ENCODE measurements at regions of chr2 and their contacts with region 1.

Region 1: GRCh38 chr2:180125245-180125962 is 118.3 kb upstream of the CWC22 start:
- DNase-seq: peak; percentile 84
- H3K4me3 ChIP-seq: no peak overlapping the region
- H3K27ac ChIP-seq: no peak overlapping the region
- H3K4me1 ChIP-seq: peaks cover 0 to 18% (median 9%) of the 10 kb centered on the region in 4 donors
- H3K27me3 ChIP-seq: no peaks in the 10 kb centered on the region
- CTCF ChIP-seq: peak in 3 of 4 experiments; percentile 33 to 49 (median 42)
- EP300 ChIP-seq: no peak
- POLR2A ChIP-seq: no peak

Region 2: GRCh38 chr2:179193759-179194394 is 931.5 kb before region 1 on chr2:
- intact Hi-C with region 1: no loop called
- DNase-seq: no peak
- H3K4me3 ChIP-seq: no peak overlapping the region
- H3K27ac ChIP-seq: no peak overlapping the region
- H3K4me1 ChIP-seq: peaks cover 0 to 24% (median 2%) of the 10 kb centered on the region in 4 donors
- H3K27me3 ChIP-seq: no peaks in the 10 kb centered on the region
- CTCF ChIP-seq: no peak
- EP300 ChIP-seq: no peak
- POLR2A ChIP-seq: no peak

Region 3: DNA sequence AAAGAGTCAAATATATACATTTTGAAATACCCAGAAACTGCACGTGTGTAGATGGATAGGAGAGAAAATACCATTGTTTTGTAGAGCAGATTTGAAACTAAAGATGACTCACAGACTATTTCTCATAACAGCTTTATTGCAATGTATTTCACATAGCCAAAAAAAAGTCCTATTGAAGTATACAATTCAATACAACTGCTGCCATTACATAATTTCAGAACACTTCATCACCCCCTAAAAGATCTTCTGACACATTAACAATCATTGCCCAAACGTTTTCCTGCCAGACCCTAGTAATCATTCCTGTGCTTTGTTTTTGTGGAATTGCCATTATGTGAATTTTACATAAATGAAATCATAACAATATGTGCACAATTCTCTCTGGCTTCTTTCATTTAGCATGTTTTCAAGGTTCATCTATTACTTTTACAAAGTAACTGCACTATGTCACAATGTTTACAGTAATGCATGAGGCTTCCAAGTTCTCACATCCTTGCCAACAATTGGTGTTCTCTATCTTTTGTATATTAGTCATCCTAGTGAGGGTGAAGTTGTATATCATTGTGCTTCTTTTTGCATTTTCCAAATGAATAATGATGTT is 260.3 kb after region 1 on chr2:
- intact Hi-C with region 1: loop called (anchors 5 kb)
- DNase-seq: no peak
- H3K4me3 ChIP-seq: no peak overlapping the region
- H3K27ac ChIP-seq: no peak overlapping the region
- H3K4me1 ChIP-seq: peaks cover 0 to 16% (median 3%) of the 10 kb centered on the region in 4 donors
- H3K27me3 ChIP-seq: no peaks in the 10 kb centered on the region
- CTCF ChIP-seq: no peak
- EP300 ChIP-seq: peak in 3 of 4 donors; percentile 41 to 56 (median 52)
- POLR2A ChIP-seq: no peak

Region 4: DNA sequence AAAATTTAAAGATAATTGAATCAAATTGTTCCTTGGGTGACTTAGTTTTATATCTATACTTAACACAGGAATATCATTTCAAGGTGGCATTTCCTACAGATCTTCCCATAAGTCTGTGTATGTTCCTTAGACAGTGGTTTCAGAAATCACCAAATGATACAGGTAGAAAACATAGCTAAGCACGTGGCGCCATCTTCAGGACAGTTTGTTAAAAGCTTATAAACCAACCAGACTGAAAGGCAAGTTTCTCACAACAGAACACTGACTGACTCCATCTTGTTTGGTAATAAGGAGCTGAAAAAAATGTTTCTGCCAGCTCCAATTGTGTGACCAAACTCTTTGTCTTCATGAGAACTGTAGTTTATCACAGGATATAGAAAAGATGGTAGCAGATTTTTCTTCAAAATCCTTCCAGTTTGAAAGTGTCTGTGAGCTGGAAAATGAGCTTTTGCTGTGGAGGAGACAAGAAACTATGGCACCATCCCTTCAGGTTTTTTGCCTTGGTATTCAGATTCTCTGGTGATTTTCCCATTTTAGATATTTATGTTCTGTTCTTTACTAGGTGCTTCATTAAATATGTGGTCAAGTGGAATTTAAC is 1589.7 kb after region 1 on chr2:
- intact Hi-C with region 1: loop called (anchors 2 kb)
- DNase-seq: peak; percentile 69
- H3K4me3 ChIP-seq: no peak overlapping the region
- H3K27ac ChIP-seq: no peak overlapping the region
- H3K4me1 ChIP-seq: no peaks in the 10 kb centered on the region
- H3K27me3 ChIP-seq: no peaks in the 10 kb centered on the region
- CTCF ChIP-seq: peak; percentile 4 to 44 (median 32)
- EP300 ChIP-seq: no peak
- POLR2A ChIP-seq: no peak